Activated T-helper 2 cell treated with anti-CD3 and anti-CD28 coated beads, Interferon-gamma antibody, Interleukin-2, Interleukin-4, amounts not matched to agents 10 μg/mL and 5 μg/mL and 100 μg/mL, durations not matched to agents 14 hours and 24 hours and 36 hours (primary cell): ENCODE measurements at regions of chr7 and their contacts with region 1.

Region 1: DNA sequence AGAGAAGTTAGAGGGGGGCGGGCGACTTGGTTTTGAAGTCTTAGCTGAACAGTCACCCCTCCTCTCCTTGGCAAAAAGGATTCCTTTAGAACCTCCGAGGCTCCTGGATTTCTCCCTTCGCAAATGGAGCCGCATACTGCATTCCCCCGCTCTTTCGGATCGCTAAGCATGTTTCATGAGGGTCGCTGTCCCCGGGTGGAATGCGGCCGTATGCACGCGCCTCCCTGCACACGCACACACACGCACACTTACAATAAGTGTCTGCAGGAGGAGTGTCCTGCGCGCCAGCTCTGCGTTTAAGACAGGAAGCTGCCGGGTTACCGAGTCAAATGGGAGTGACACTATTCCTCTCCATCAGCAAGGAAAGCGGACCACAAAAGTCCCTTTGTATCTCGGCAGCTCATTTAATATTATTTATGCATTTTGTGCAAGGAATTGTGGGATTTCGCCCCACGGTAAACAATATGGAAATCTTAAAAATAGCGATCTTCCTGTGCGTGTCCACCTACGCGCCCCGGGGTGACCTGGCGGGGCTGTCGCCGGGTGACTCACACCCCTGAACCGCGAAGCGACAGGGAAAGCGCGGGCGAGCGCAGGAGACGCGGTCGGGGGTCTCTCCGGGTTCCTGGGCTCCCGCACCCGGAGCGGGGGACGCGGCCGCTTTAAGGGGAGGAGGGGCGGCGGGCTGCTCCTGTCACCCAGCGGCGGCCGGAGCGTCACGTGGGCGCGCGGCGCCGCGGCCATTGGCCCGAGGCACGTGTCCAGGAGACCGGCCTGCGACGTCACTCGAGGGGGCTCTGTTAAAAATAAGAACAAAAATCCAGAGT is 978 bp upstream of the EN2 start:
- DNase-seq: no peak
- H3K4me3 Mint-ChIP-seq: peak overlapping the region; percentile 37
- H3K27ac Mint-ChIP-seq: peak overlapping the region; percentile 67
- H3K4me1 Mint-ChIP-seq: peaks cover 9% of the 10 kb centered on the region
- H3K27me3 Mint-ChIP-seq: peaks cover 68% of the 10 kb centered on the region

Region 2: GRCh38 chr7:157016352-157017041 is 1559.5 kb after region 1 on chr7:
- intact Hi-C with region 1: loop called (anchors 5 kb)
- DNase-seq: no peak
- H3K4me3 Mint-ChIP-seq: no peak overlapping the region
- H3K27ac Mint-ChIP-seq: no peak overlapping the region
- H3K4me1 Mint-ChIP-seq: peaks cover 17% of the 10 kb centered on the region
- H3K27me3 Mint-ChIP-seq: peaks cover 80% of the 10 kb centered on the region